AG04450 (cell line): ENCODE measurements at regions of chr11 and their contacts with region 1.

Region 1: DNA sequence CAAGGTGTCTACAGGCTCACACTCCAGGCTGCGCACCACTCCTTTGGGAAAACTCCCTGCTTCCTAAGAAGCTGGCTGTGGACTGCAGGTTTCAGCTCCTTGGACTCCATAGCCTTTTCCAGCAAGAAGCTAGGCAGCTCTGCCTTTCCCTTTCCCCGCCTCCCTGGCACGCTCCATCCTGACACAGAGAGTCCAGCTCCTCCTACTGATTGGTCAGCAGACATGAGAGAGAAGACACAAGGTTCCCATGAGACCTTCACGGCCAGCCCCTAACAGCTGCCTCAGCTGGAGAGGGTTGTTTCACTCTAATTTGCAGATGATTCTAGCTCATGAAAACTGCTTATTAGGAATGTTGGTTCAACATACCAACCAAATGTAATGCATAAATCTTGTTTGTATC is 27.6 kb downstream of the TENM4 start:
- DNase-seq: peak; percentile 81
- H3K4me3 ChIP-seq: no peak overlapping the region
- H3K27ac ChIP-seq: no peak overlapping the region
- H3K27me3 ChIP-seq: no peaks in the 10 kb centered on the region
- CTCF ChIP-seq: no peak

Region 2: DNA sequence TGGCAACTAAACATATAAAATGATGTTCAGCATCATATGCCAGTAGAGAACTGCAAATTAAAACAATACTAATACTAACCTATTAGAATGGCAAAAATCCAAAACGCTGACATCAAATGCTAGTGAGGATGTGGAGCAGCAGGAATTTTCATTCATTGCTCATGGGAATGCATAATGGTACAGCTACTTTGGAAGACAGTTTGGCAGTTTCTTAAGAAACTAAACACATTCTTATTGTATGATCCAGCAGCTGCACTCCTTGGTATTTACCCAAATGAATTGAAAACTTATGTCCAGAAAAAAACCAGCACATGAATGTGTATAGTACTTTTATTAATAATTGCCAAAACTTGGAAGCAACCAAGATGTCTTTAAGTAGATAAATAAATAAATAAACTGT is 230.5 kb before region 1 on chr11:
- CTCF ChIA-PET with region 1: no interaction called
- POLR2A ChIA-PET with region 1: no interaction called
- DNase-seq: peak; percentile 85
- H3K4me3 ChIP-seq: no peak overlapping the region
- H3K27ac ChIP-seq: no peak overlapping the region
- H3K27me3 ChIP-seq: no peaks in the 10 kb centered on the region
- CTCF ChIP-seq: no peak

Region 3: GRCh38 chr11:79400717-79401686 is 12.3 kb before region 1 on chr11:
- CTCF ChIA-PET with region 1: interaction called, 12 read pairs
- POLR2A ChIA-PET with region 1: no interaction called
- DNase-seq: no peak
- H3K4me3 ChIP-seq: no peak overlapping the region
- H3K27ac ChIP-seq: no peak overlapping the region
- H3K27me3 ChIP-seq: no peaks in the 10 kb centered on the region
- CTCF ChIP-seq: peak; percentile 65